HCT116 (cell line): ENCODE measurements at regions of chr1 and their contacts with region 1.

Region 1: DNA sequence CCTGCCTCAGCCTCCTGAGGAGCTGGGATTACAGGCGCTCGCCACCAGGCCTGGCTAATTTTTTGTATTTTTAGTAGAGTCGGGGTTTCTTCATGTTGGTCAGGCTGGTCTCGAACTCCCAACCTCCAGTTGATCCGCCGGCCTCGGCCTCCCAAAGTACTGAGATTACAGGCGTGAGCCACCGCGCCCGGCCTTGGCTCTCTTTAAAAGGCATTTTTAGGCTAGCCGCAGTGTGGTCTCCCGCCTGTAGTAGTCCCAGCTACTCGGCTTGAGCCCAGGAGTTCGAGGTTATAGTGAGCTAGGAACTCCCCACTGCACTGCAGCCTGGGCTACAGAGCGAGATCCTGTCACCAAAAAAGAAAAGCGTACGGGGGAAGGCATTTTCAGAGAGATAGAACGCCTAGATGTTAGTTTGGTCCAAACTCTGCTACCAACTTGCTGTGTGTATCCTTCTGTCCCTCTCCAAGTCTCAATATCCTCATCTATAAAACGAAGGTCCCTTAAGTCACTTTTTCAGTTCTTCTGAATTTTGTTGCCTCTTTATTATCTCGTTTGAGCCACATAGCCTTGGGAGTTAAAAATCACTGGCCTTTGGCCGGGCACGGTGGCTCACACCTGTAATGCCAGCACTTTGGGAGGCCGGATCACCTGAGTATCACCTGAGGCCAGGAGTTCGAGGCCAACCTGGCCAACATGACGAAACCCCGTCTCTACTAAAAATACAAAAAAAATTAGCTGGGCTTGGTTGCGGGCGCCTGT is 734 bp downstream of the MED18 start:
- DNase-seq: no peak
- ATAC-seq: peak; percentile 55
- H3K4me3 ChIP-seq: peak overlapping the region; percentile 68 to 91
- H3K27ac ChIP-seq: peak overlapping the region; percentile 84
- H3K4me1 ChIP-seq: peaks cover 4 to 18% of the 10 kb centered on the region in 2 experiments; a peak in 3 of 4 replicates
- H3K27me3 ChIP-seq: no peaks in the 10 kb centered on the region
- CTCF ChIP-seq: no peak
- POLR2A ChIP-seq: no peak
- RAD21 ChIP-seq: no peak; the same call in 1 of the 2 replicates

Region 2: GRCh38 chr1:28296401-28297261 is 32.9 kb before region 1 on chr1:
- CTCF ChIA-PET with region 1: no interaction called
- POLR2A ChIA-PET with region 1: no interaction called
- RAD21 ChIA-PET with region 1: no interaction called
- intact Hi-C with region 1: no loop called
- DNase-seq: no peak
- ATAC-seq: no peak
- H3K4me3 ChIP-seq: no peak overlapping the region
- H3K27ac ChIP-seq: no peak overlapping the region
- H3K4me1 ChIP-seq: peaks cover 0 to 9% of the 10 kb centered on the region in 2 experiments; a peak in 1 of 4 replicates
- H3K27me3 ChIP-seq: no peaks in the 10 kb centered on the region
- CTCF ChIP-seq: no peak
- POLR2A ChIP-seq: no peak
- RAD21 ChIP-seq: no peak

Region 3: GRCh38 chr1:28313710-28314546 is 15.6 kb before region 1 on chr1:
- CTCF ChIA-PET with region 1: interaction called, 3 read pairs
- POLR2A ChIA-PET with region 1: interaction called, 15 read pairs
- RAD21 ChIA-PET with region 1: no interaction called
- intact Hi-C with region 1: no loop called
- DNase-seq: peak; percentile 38
- ATAC-seq: peak; percentile 92
- H3K4me3 ChIP-seq: peak overlapping the region in 1 of 2 experiments; percentile 12; a peak in 1 of 4 replicates
- H3K27ac ChIP-seq: peak overlapping the region; percentile 4; the same call in 1 of the 2 replicates
- H3K4me1 ChIP-seq: peaks cover 15 to 19% of the 10 kb centered on the region in 2 experiments
- H3K27me3 ChIP-seq: no peaks in the 10 kb centered on the region
- CTCF ChIP-seq: no peak
- POLR2A ChIP-seq: no peak
- RAD21 ChIP-seq: no peak

Region 4: GRCh38 chr1:28341591-28341990 is 12.0 kb after region 1 on chr1:
- CTCF ChIA-PET with region 1: no interaction called
- POLR2A ChIA-PET with region 1: interaction called, 18 read pairs
- RAD21 ChIA-PET with region 1: no interaction called
- intact Hi-C with region 1: no loop called
- DNase-seq: no peak
- ATAC-seq: peak; percentile 61; the same call in 1 of the 2 replicates
- H3K4me3 ChIP-seq: no peak overlapping the region
- H3K27ac ChIP-seq: no peak overlapping the region
- H3K4me1 ChIP-seq: peaks cover 27 to 51% of the 10 kb centered on the region in 2 experiments
- H3K27me3 ChIP-seq: no peaks in the 10 kb centered on the region
- CTCF ChIP-seq: no peak
- POLR2A ChIP-seq: no peak
- RAD21 ChIP-seq: no peak

Region 5: GRCh38 chr1:28354121-28354520 is 24.5 kb after region 1 on chr1:
- CTCF ChIA-PET with region 1: interaction called, 4 read pairs
- POLR2A ChIA-PET with region 1: interaction called, 13 read pairs
- RAD21 ChIA-PET with region 1: no interaction called
- intact Hi-C with region 1: no loop called
- DNase-seq: no peak
- ATAC-seq: no peak
- H3K4me3 ChIP-seq: no peak overlapping the region
- H3K27ac ChIP-seq: no peak overlapping the region; the same call in 1 of the 2 replicates
- H3K4me1 ChIP-seq: peaks cover 27 to 41% of the 10 kb centered on the region in 2 experiments
- H3K27me3 ChIP-seq: no peaks in the 10 kb centered on the region
- CTCF ChIP-seq: no peak
- POLR2A ChIP-seq: no peak
- RAD21 ChIP-seq: no peak

Region 6: GRCh38 chr1:28449904-28450303 is 120.3 kb after region 1 on chr1:
- CTCF ChIA-PET with region 1: no interaction called
- POLR2A ChIA-PET with region 1: no interaction called
- RAD21 ChIA-PET with region 1: no interaction called
- intact Hi-C with region 1: no loop called
- DNase-seq: no peak
- ATAC-seq: no peak
- H3K4me3 ChIP-seq: no peak overlapping the region
- H3K27ac ChIP-seq: no peak overlapping the region
- H3K4me1 ChIP-seq: no peaks in the 10 kb centered on the region
- H3K27me3 ChIP-seq: no peaks in the 10 kb centered on the region
- CTCF ChIP-seq: no peak
- POLR2A ChIP-seq: no peak
- RAD21 ChIP-seq: no peak